B cell (primary cell): ENCODE measurements at regions of chr12 and their contacts with region 1.

Region 1: DNA sequence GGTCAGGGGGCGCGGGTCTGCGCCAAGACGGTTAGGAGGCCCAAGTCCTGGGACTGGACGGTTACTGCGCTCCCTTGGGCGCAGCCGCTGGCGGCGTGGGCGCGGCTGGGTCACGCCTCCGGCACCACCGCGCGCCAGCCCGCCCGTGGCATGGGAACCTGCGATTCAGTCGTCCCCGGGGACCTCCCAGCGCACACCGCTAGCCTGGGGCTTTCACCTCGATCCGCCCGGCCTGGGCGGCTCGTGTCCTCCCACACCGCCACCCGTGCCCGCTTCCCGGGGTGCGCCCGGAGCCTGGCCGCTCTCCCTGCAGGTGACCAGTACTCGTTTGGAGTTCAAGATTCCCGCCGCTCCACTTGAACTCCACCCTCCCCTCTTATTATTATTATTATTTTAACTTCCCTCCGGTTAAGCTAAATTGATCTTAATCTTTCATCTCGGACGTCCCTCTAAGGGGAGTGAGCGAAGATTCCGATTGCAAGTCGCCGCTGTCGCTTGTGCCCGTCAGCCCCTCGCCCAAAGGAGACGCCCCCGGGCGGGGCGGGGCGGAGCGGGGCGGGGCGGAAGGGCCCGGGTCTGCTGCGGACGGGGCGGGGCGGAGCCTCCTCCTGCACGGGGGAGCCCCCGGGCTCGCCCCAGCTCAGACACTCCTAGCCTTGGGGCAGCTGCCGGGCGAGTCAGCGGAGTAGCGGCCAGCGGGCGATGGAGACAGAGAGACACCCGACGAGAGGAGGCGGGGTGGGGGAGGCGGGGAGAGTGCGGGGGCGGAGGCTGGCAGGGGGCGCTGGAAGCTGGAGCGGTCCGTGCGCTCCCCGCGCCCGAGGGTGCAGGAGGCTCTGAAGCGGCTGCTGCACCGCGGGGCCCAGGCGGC is at the start of gene KCNMB4:
- DNase-seq: peak; percentile 82
- ATAC-seq: peak; percentile 87
- H3K4me3 ChIP-seq: peak within 1 kb of the TSS; percentile 72 to 93 (median 76)
- H3K4me3 Mint-ChIP-seq: peak within 1 kb of the TSS; percentile 96
- H3K27ac ChIP-seq: peak within 1 kb of the TSS; percentile 15 to 41
- H3K27ac Mint-ChIP-seq: peak within 1 kb of the TSS; percentile 70
- H3K4me1 ChIP-seq: peaks cover 17 to 18% of the 10 kb centered on the region in 2 donors
- H3K4me1 Mint-ChIP-seq: peaks cover 18% of the 10 kb centered on the region
- H3K27me3 ChIP-seq: peaks cover 0 to 13% (median 9%) of the 10 kb centered on the region in 4 experiments
- H3K27me3 Mint-ChIP-seq: peaks cover 6% of the 10 kb centered on the region
- CTCF ChIP-seq: no peak
- total RNA-seq, gene KCNMB4: 0.67 and 0.80 TPM in 2 replicates

Region 2: DNA sequence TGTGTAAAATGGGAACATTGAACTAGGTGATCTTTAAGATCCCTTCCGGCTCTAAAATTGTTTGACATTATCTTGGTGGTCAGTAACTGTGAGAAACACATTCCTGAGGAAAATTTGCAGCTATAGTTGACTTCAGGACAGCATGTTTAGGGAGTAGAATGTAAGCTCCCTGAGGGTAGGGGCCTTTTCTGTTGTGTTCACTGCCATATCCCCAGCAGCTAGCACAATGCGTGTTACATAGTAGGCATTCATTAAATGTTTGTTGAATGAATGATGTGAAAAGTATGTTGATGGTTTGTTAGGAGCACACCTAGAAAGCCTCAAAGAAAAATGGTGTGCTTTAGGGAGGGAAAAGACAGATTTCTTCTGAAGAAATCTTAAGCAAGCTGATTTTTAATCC is 38.3 kb before region 1 on chr12:
- CTCF ChIA-PET with region 1: no interaction called
- POLR2A ChIA-PET with region 1: no interaction called
- intact Hi-C with region 1: loop called (anchors 2 kb)
- DNase-seq: no peak
- ATAC-seq: no peak
- H3K4me3 ChIP-seq: no peak overlapping the region
- H3K4me3 Mint-ChIP-seq: no peak overlapping the region
- H3K27ac ChIP-seq: no peak overlapping the region
- H3K27ac Mint-ChIP-seq: no peak overlapping the region
- H3K4me1 ChIP-seq: no peaks in the 10 kb centered on the region
- H3K4me1 Mint-ChIP-seq: no peaks in the 10 kb centered on the region
- H3K27me3 ChIP-seq: no peaks in the 10 kb centered on the region
- H3K27me3 Mint-ChIP-seq: no peaks in the 10 kb centered on the region
- CTCF ChIP-seq: no peak